GM13977 (cell line): ENCODE measurements at regions of chr10 and their contacts with region 1.

Region 1: DNA sequence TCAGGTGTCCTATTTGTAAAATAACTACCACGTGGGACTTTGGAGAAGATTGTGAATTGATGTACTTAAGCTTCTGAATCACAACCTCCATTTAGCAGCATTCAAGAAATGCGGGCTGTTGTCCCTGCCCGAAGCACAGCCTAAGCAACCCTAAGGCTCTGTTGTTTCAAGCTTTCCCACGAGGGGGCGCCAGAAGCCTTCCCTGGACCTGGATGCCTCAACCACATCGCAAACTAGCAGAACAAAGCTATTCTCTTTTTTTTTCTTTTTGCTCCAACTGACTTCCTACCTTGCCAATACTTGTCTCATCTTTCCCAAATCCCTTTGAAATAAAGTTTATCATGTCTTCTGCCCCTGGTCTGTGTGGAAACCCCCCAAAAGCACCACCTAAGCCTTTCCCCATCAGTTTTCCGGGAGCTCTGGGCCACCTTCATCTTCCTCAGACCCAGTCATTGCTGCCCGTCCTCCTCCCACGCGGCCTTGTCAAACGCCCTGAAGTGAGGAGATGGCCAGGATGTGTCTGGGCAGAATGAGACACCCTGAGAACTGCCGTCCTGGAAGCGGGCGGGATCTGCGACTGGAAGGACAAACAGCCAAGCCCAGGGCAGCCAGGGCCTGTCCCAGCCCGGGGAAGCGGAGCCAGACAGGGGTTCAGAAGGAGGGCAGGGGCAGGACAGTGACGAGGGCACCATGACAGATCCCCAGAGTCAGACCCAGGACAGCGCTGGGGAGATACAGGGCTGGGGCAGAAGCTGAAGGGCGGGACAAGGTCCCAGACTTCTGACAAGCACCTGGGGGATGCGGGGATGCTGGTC is 112.7 kb downstream of the SLIT1 start:
- DNase-seq: peak; percentile 88
- CTCF ChIP-seq: peak; percentile 89

Region 2: GRCh38 chr10:97210543-97210961 is 137.5 kb after region 1 on chr10:
- in situ Hi-C with region 1: loop called (anchors 10 kb)
- DNase-seq: peak; percentile 75
- CTCF ChIP-seq: peak; percentile 89